HepG2 (cell line): ENCODE measurements at regions of chr4 and their contacts with region 1.

Region 1: DNA sequence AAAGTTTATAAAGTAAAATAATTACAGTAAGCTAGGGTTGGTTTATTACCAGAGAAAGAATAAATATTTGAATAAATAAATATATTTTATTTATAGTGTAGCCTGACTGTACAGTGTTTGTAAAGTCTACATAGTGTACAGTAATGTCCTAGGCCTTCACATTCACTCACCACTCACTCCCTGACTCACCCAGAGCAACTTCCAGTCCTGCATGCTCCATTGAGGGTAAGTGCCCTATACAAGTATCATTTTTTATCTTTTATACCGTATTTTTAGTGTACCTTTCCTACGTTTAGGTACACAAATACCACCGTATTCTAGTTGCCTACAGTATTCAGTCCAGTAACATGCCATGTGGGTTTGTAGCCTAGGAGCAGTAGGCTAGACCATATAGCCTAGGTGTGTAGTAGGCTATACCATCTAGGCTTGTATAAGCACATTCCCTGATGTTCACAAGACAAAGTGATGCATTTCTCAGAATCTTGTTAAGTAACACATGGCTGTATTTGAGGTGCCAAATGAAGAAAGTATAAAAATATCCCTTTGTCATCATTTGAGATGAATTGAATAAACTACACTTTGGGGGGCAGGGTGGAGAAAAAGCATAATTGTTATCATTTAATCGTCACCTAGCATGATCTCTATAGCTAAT is 14.7 kb upstream of the KLHL8 start:
- DNase-seq: no peak
- ATAC-seq: peak; percentile 46
- H3K4me3 ChIP-seq: peak overlapping the region in 2 of 3 experiments; percentile 58 to 69; a peak in 4 of 6 replicates
- H3K27ac ChIP-seq: no peak overlapping the region
- H3K4me1 ChIP-seq: peaks cover 20% of the 10 kb centered on the region
- H3K27me3 ChIP-seq: peaks cover 0 to 2% of the 10 kb centered on the region in 2 experiments; a peak in 1 of 5 replicates
- CTCF ChIP-seq: no peak
- EP300 ChIP-seq: no peak
- POLR2A ChIP-seq: no peak
- RAD21 ChIP-seq: no peak

Region 2: GRCh38 chr4:86927843-86928395 is 307.2 kb before region 1 on chr4:
- CTCF ChIA-PET with region 1: no interaction called
- POLR2A ChIA-PET with region 1: no interaction called
- in situ Hi-C with region 1: loop called (anchors 10 kb)
- intact Hi-C with region 1: no loop called
- DNase-seq: peak; percentile 87
- ATAC-seq: peak; percentile 74
- H3K4me3 ChIP-seq: no peak overlapping the region
- H3K27ac ChIP-seq: no peak overlapping the region
- H3K4me1 ChIP-seq: peaks cover 21% of the 10 kb centered on the region
- H3K27me3 ChIP-seq: no peaks in the 10 kb centered on the region
- CTCF ChIP-seq: no peak
- EP300 ChIP-seq: peak in 1 of 2 experiments; percentile 60; a peak in 1 of 4 replicates
- POLR2A ChIP-seq: no peak
- RAD21 ChIP-seq: no peak

Region 3: DNA sequence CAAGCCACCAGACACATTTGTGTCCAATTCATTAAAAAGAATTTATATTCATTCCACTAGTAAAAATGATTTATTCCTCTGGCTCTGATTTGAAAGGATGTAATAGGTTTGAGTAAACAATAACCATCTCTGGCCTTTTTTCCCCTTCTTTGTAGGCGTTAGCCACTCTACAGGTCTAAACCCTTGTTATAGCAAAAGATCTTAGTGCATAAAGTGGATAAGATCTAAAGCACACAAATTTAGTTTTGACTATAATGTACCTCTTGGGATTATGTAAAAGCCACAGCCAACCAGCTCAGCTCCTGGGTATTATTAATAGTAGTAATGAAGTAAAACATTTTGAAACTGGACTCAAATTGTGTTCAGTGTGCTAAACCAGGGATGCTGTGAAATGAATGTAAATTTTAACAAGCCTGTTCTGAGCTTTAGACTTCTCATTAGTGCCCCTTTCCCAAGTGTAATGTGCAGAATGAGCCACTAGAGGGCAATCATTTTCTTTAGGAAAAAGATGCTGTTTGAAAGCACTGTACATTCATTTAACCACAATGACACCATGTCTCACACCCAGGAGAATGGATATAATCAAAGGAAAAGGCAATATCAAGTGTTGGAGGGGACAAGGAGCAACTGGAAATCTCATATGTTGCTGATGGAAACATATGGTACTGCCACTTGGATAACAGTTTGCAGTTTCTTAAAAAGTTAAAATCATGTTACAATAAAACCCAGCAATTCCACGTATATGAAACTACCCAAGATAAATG is 84.5 kb before region 1 on chr4:
- CTCF ChIA-PET with region 1: interaction called, 22 read pairs
- POLR2A ChIA-PET with region 1: no interaction called
- in situ Hi-C with region 1: loop called (anchors 5 kb)
- intact Hi-C with region 1: loop called (anchors 1 kb)
- DNase-seq: peak; percentile 70
- ATAC-seq: peak; percentile 67
- H3K4me3 ChIP-seq: no peak overlapping the region
- H3K27ac ChIP-seq: no peak overlapping the region
- H3K4me1 ChIP-seq: no peaks in the 10 kb centered on the region
- H3K27me3 ChIP-seq: no peaks in the 10 kb centered on the region
- CTCF ChIP-seq: peak; percentile 79
- EP300 ChIP-seq: no peak
- POLR2A ChIP-seq: no peak
- RAD21 ChIP-seq: peak; percentile 76